Endothelial cell of umbilical vein (primary cell): ENCODE measurements at regions of chr20 and their contacts with region 1.

Region 1: DNA sequence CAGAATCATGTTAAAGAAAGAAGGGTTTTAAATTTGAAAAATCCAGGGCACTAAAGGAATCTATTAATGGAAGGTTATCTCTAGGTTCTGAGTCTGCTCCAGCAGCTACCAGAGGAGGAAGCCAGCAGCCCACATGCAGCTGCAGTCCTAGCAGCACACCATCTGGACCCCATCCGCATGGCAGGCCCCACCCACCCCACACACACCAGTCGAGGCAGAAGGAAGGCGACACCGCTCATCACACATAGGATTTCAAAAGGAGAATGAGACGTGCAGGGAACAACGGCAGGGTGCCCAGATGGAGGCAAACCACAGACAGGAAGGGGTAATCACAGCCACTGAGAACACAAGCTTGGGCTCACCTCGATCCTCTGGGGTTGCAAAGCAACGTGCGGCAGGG is 78.9 kb downstream of the GINS1 start:
- DNase-seq: peak; percentile 15
- H3K4me3 ChIP-seq: no peak overlapping the region
- H3K27ac ChIP-seq: no peak overlapping the region
- H3K4me1 ChIP-seq: peaks cover 33% of the 10 kb centered on the region
- H3K27me3 ChIP-seq: no peaks in the 10 kb centered on the region
- CTCF ChIP-seq: no peak
- POLR2A ChIP-seq: no peak

Region 2: DNA sequence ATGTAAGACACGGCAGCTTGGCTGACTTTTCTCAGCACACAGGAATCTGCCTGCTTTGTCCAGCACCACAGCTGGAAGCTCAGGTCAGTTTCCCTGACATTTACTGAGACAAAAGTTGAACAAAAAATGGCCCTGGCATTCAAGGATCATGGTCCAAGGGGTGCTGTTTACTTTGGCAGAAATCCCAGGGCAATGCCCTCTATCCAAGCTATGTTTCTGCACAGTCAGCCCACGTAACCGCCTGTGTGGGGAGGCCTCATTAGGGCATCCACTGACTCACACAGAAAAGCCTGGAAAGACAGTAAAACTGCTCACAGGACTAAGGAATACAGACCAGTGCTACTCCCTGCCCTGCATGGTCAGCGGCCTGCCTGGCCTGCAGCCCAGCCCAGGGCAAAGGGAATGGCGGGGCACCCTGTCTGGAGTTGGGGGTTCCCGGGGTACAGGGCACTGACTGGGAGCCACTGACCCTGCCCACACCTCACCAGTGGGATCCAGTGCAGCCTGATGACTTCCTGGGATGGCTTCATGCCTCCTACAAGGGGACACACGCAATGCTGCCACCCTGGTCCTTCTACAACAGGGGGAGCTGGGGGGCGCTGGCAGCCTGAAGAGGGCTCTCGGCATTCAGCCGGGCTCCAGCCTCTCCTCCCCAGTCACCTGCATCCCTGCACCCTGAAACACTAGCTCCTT is 21.8 kb after region 1 on chr20:
- CTCF ChIA-PET with region 1: interaction called, 5 read pairs
- POLR2A ChIA-PET with region 1: no interaction called
- dilution Hi-C with region 1: no loop called
- intact Hi-C with region 1: loop called (anchors 1 kb)
- DNase-seq: peak; percentile 85
- H3K4me3 ChIP-seq: no peak overlapping the region
- H3K27ac ChIP-seq: peak overlapping the region; percentile 10
- H3K4me1 ChIP-seq: peaks cover 19% of the 10 kb centered on the region
- H3K27me3 ChIP-seq: no peaks in the 10 kb centered on the region
- CTCF ChIP-seq: no peak
- POLR2A ChIP-seq: no peak

Region 3: GRCh38 chr20:25532119-25532751 is 45.9 kb after region 1 on chr20:
- CTCF ChIA-PET with region 1: no interaction called
- POLR2A ChIA-PET with region 1: no interaction called
- dilution Hi-C with region 1: no loop called
- intact Hi-C with region 1: loop called (anchors 1 kb)
- DNase-seq: peak; percentile 31
- H3K4me3 ChIP-seq: no peak overlapping the region
- H3K27ac ChIP-seq: no peak overlapping the region
- H3K4me1 ChIP-seq: peaks cover 11% of the 10 kb centered on the region
- H3K27me3 ChIP-seq: no peaks in the 10 kb centered on the region
- CTCF ChIP-seq: peak in 1 of 2 donors; percentile 50
- POLR2A ChIP-seq: no peak

Region 4: GRCh38 chr20:25574425-25574824 is 88.0 kb after region 1 on chr20:
- CTCF ChIA-PET with region 1: no interaction called
- POLR2A ChIA-PET with region 1: no interaction called
- dilution Hi-C with region 1: no loop called
- intact Hi-C with region 1: loop called (anchors 5 kb)
- DNase-seq: peak; percentile 60
- H3K4me3 ChIP-seq: no peak overlapping the region
- H3K27ac ChIP-seq: no peak overlapping the region
- H3K4me1 ChIP-seq: peaks cover 11% of the 10 kb centered on the region
- H3K27me3 ChIP-seq: no peaks in the 10 kb centered on the region
- CTCF ChIP-seq: peak; percentile 17 to 31
- POLR2A ChIP-seq: no peak

Region 5: GRCh38 chr20:25623736-25624499 is 137.5 kb after region 1 on chr20 and contains the start of gene NANP:
- CTCF ChIA-PET with region 1: no interaction called
- POLR2A ChIA-PET with region 1: no interaction called
- dilution Hi-C with region 1: no loop called
- intact Hi-C with region 1: loop called (anchors 1 kb)
- DNase-seq: peak; percentile 99
- H3K4me3 ChIP-seq: peak within 1 kb of the TSS; percentile 55 to 85 (median 82)
- H3K27ac ChIP-seq: peak within 1 kb of the TSS; percentile 91
- H3K4me1 ChIP-seq: peaks cover 11% of the 10 kb centered on the region
- H3K27me3 ChIP-seq: no peaks in the 10 kb centered on the region
- CTCF ChIP-seq: no peak
- POLR2A ChIP-seq: peak; percentile 97
- total RNA-seq, gene NANP: 7.5 and 8.0 TPM in 2 replicates